Natural killer cell (primary cell): ENCODE measurements at regions of chr19 and their contacts with region 1.

Region 1: DNA sequence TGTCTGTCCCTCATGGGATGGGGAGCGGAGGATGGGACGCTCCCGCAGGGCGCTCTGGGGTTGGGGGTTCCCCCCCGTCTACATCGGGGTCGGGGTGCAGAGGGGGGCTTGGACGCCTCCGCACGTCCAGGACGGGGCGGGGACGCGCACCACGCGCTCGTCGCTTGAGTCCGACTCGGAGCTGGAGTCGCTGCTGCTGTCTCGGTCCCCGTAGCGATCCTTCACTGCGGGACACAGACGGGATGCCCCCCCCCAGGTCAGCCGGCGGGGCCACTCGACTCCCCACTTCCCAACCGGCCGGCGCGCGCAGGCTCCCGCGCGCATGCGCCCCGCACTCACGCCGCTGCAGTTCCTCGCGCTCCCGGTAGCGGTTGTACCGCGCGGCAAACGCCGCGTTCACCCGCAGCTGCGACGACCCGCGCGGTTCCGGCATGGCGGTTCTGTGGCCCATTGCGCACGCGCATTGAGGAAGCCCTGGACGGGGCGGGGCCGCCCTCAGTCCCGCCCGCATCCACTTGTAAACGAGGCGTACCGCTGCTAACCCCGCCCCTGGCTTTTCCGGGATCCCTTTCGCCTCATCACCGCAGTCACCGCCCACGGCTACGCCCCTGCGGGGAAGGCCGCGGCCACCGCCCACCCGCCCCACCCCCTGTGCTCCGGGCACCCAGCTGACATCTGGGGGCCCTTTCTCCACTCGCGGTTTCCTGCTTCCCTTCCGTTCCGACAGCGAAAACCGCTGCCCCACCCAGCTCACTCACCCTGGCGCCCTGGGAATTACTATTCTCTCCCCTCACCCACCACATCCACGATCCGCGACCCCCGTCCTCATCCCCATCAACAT is at the start of gene KRI1:
- DNase-seq: peak; percentile 98 to 100
- ATAC-seq: peak; percentile 38 to 71 (median 51)
- H3K4me3 ChIP-seq: peak within 1 kb of the TSS; percentile 99
- H3K4me3 Mint-ChIP-seq: peak within 1 kb of the TSS; percentile 96
- H3K27ac ChIP-seq: peak within 1 kb of the TSS; percentile 93
- H3K27ac Mint-ChIP-seq: peak within 1 kb of the TSS; percentile 93 to 100
- H3K4me1 ChIP-seq: peaks cover 40% of the 10 kb centered on the region
- H3K4me1 Mint-ChIP-seq: peaks cover 47 to 62% of the 10 kb centered on the region in 2 donors
- H3K27me3 ChIP-seq: no peaks in the 10 kb centered on the region
- H3K27me3 Mint-ChIP-seq: no peaks in the 10 kb centered on the region
- CTCF ChIP-seq: no peak
- total RNA-seq, gene KRI1: 36.6 to 53.0 (median 49.5) TPM

Region 2: DNA sequence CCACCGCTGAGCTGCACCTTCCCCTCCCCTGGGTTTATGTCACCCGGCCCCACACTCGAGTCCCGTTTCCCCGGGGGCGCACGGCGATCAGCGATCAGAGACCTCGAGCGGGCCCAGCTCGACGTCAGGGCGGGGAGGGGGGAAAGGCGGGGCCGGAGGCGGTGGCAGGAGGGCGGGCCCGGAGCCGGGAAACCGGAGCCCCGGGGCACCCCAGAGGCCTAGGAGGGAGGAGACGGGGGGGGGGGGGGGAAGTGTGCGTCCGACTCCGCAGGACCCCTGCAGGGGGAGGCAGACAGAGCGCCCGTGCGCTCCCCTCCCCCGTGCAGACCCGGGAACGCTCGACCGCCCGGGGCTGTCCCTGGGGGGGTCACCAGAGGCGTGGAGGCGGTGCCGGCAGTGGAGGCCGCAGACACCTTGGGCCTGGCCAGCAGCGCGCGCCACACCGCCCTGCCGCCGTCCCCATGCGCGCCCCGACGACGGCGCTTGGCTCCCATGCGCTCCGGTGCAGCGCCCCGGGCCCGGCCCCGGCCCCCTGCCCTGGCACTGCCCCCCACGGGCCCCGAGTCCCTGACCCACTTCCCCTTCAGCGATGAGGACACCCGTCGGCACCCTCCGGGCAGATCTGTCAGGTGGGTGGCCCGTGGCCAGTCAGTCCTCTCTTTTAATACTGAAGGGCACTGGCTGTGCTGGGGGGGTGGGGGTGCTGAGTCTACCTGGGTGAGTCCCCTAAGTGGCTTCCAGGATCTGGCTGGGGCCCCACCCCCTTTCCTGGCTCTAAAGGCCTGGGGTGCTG is 133.6 kb before region 1 on chr19:
- intact Hi-C with region 1: loop called (anchors 5 kb)
- DNase-seq: peak; percentile 73 to 85
- ATAC-seq: peak; percentile 32 to 49 (median 47)
- H3K4me3 ChIP-seq: peak overlapping the region; percentile 52
- H3K4me3 Mint-ChIP-seq: peak overlapping the region; percentile 95
- H3K27ac ChIP-seq: peak overlapping the region; percentile 94
- H3K27ac Mint-ChIP-seq: peak overlapping the region; percentile 95 to 96
- H3K4me1 ChIP-seq: peaks cover 56% of the 10 kb centered on the region
- H3K4me1 Mint-ChIP-seq: peaks cover 55 to 66% of the 10 kb centered on the region in 2 donors
- H3K27me3 ChIP-seq: no peaks in the 10 kb centered on the region
- H3K27me3 Mint-ChIP-seq: peaks cover 3 to 7% of the 10 kb centered on the region in 2 donors
- CTCF ChIP-seq: no peak

Region 3: DNA sequence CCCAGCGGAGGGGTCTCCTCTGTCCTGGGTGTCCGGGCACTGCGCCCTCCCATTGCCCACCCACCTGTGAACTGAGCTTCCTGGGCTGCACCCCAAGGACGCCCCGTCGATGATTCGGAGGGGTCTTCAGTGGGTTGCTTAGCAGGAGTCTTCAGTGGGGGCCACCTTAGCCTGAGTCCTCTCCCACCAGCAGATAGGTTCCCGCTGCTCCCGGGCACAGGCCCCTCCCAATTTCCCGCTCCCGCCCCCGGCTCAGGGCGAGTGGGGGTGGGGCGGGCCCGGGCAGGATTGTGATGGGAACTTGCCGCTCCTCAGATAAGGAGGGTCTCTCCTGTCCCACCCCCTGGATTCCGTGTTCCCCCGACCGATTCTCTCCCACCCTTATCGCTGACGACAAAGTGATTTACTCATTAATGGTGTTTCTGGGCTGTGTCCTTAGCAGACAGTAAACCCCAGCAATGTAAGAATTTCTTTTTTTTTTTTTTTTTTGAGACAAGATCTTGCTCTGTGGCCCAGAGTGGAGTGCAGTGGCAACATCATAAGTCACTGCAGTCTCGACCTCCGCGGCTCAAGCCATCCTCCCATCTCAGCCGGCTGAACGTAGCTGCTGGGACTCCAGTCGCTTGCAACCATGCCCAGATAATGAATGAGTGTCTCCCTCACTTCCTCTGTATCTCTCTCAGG is 47.9 kb before region 1 on chr19:
- intact Hi-C with region 1: loop called (anchors 1 kb)
- DNase-seq: peak; percentile 61 to 74
- ATAC-seq: peak; percentile 20 to 33 (median 29)
- H3K4me3 ChIP-seq: peak overlapping the region; percentile 97
- H3K4me3 Mint-ChIP-seq: peak overlapping the region; percentile 81
- H3K27ac ChIP-seq: peak overlapping the region; percentile 89
- H3K27ac Mint-ChIP-seq: peak overlapping the region; percentile 86 to 91
- H3K4me1 ChIP-seq: peaks cover 80% of the 10 kb centered on the region
- H3K4me1 Mint-ChIP-seq: peaks cover 60 to 67% of the 10 kb centered on the region in 2 donors
- H3K27me3 ChIP-seq: peaks cover 2% of the 10 kb centered on the region
- H3K27me3 Mint-ChIP-seq: peaks cover 0 to 3% of the 10 kb centered on the region in 2 donors
- CTCF ChIP-seq: no peak

Region 4: GRCh38 chr19:10533646-10534386 is 32.0 kb before region 1 on chr19:
- intact Hi-C with region 1: no loop called
- DNase-seq: no peak
- ATAC-seq: no peak
- H3K4me3 ChIP-seq: no peak overlapping the region
- H3K4me3 Mint-ChIP-seq: no peak overlapping the region
- H3K27ac ChIP-seq: no peak overlapping the region
- H3K27ac Mint-ChIP-seq: no peak overlapping the region
- H3K4me1 ChIP-seq: peaks cover under 1% of the 10 kb centered on the region
- H3K4me1 Mint-ChIP-seq: peaks cover 3 to 9% of the 10 kb centered on the region in 2 donors
- H3K27me3 ChIP-seq: no peaks in the 10 kb centered on the region
- H3K27me3 Mint-ChIP-seq: no peaks in the 10 kb centered on the region
- CTCF ChIP-seq: no peak

Region 5: GRCh38 chr19:10551698-10552301 is 14.0 kb before region 1 on chr19:
- intact Hi-C with region 1: loop called (anchors 1 kb)
- DNase-seq: peak; percentile 49 to 73
- ATAC-seq: peak; percentile 27 to 44 (median 44)
- H3K4me3 ChIP-seq: no peak overlapping the region
- H3K4me3 Mint-ChIP-seq: peak overlapping the region; percentile 35
- H3K27ac ChIP-seq: peak overlapping the region; percentile 68
- H3K27ac Mint-ChIP-seq: peak overlapping the region; percentile 94
- H3K4me1 ChIP-seq: peaks cover 65% of the 10 kb centered on the region
- H3K4me1 Mint-ChIP-seq: peaks cover 34 to 55% of the 10 kb centered on the region in 2 donors
- H3K27me3 ChIP-seq: no peaks in the 10 kb centered on the region
- H3K27me3 Mint-ChIP-seq: no peaks in the 10 kb centered on the region
- CTCF ChIP-seq: peak; percentile 19

Region 6: DNA sequence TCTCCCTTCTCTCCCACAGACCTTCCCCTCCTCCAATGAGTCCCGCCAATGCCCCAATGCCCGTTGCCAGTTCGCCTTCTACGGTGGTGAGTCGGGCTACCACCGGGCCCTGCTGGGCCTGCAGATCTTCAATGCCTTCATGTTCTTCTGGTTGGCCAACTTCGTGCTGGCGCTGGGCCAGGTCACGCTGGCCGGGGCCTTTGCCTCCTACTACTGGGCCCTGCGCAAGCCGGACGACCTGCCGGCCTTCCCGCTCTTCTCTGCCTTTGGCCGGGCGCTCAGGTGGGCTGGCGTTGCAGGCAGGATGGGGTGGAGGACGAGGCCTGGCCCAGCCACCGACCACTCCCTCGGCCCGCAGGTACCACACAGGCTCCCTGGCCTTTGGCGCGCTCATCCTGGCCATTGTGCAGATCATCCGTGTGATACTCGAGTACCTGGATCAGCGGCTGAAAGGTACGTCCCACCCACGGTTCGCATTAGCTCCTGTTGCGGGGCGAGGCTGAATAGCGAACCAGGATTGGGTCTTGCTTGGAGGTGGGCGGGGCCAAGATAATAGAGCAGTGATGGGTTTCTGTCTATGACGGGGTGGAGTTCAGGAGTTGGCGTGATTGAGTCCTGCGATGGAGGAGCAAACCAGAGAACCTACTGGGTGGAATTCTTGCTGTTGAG is 70.7 kb after region 1 on chr19:
- intact Hi-C with region 1: no loop called
- DNase-seq: no peak
- ATAC-seq: no peak
- H3K4me3 ChIP-seq: no peak overlapping the region
- H3K4me3 Mint-ChIP-seq: no peak overlapping the region
- H3K27ac ChIP-seq: no peak overlapping the region
- H3K27ac Mint-ChIP-seq: peak overlapping the region; percentile 7 to 73
- H3K4me1 ChIP-seq: peaks cover 17% of the 10 kb centered on the region
- H3K4me1 Mint-ChIP-seq: peaks cover 12 to 26% of the 10 kb centered on the region in 2 donors
- H3K27me3 ChIP-seq: no peaks in the 10 kb centered on the region
- H3K27me3 Mint-ChIP-seq: no peaks in the 10 kb centered on the region
- CTCF ChIP-seq: no peak

Region 7: DNA sequence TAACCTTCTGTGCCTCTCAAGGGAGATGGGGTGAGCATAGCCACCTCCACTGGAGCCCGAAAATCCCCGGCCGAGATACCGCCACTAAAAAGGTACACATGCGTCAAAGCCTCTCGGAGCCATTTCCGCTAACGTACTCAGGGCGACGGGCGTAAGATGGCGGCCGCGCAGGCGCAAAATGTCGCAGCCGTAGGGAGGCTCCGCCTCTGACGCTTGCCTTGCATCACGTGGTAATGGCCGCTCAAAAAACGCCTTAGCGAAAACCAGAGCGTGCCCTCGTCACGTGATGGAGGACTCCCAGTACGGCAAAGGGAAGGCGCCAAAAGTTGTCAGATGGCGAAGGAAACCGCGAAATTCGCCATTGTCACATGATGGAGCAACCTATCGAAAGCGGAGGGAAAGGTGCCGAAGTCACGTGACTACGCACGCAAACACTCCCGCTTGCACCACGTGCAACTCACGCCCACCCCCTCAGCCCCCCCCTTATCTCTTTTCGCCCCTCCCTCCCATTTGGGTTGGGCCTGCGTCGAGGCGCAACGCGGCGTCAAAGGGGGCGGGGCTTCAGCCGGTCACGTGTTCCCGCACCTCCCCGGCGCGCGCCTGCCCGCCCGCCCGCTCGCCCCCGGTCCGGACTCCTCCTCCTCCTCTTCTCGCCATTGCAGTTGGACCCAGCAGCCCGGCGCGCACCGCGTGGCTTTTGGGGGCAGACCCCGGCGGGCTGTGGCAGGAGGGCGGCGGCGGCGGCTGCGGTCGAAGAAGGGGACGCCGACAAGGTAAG is 88.1 kb after region 1 on chr19 and contains the start of gene ILF3:
- intact Hi-C with region 1: loop called (anchors 5 kb)
- DNase-seq: peak; percentile 100
- ATAC-seq: peak; percentile 75 to 93 (median 76)
- H3K4me3 ChIP-seq: peak within 1 kb of the TSS; percentile 100
- H3K4me3 Mint-ChIP-seq: peak within 1 kb of the TSS; percentile 91
- H3K27ac ChIP-seq: peak within 1 kb of the TSS; percentile 100
- H3K27ac Mint-ChIP-seq: peak within 1 kb of the TSS; percentile 97 to 98
- H3K4me1 ChIP-seq: peaks cover 39% of the 10 kb centered on the region
- H3K4me1 Mint-ChIP-seq: peaks cover 31 to 40% of the 10 kb centered on the region in 2 donors
- H3K27me3 ChIP-seq: no peaks in the 10 kb centered on the region
- H3K27me3 Mint-ChIP-seq: no peaks in the 10 kb centered on the region
- CTCF ChIP-seq: no peak
- total RNA-seq, gene ILF3: 329 to 365 (median 332) TPM

Region 8: DNA sequence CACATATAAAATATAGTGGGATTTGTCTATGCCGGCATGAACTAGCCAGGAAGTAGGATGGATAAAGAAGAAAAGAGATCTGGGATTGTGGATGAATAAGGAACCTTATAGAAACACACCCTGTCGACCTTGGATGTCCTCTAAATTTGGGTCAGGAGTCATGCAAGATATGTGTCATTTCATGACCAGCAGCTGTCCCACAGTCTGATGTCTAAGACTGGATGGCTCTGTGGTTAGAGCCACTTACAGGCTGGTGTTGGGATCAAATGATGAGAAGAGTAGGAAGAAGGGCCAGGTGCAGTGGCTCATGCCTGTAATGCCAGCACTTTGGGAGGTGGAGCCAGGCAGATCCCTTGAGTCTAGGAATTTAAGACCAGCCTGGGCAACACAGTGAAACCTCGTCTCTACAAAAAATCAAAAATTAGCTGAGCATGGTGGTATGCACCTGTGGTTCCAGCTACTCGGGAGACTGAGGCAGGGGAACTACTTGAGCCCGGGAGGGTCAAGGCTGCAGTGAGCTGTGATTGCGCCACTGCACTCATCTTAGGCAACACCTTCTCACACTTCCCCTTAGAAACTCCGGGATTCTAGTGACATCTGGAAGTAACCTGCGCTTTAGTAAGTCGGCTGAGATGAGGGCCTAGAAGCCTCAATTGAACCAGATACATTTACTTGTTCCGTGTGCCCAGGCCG is 239.4 kb after region 1 on chr19:
- intact Hi-C with region 1: no loop called
- DNase-seq: no peak
- ATAC-seq: no peak
- H3K4me3 ChIP-seq: no peak overlapping the region
- H3K4me3 Mint-ChIP-seq: no peak overlapping the region
- H3K27ac ChIP-seq: no peak overlapping the region
- H3K27ac Mint-ChIP-seq: peak overlapping the region; percentile 7 to 54
- H3K4me1 ChIP-seq: peaks cover 45% of the 10 kb centered on the region
- H3K4me1 Mint-ChIP-seq: peaks cover 20 to 33% of the 10 kb centered on the region in 2 donors
- H3K27me3 ChIP-seq: no peaks in the 10 kb centered on the region
- H3K27me3 Mint-ChIP-seq: no peaks in the 10 kb centered on the region
- CTCF ChIP-seq: no peak